ENCODE measurements at regions of chr1 and their contacts with region 1.

Region 1: GRCh38 chr1:110196917-110197765 is 13.0 kb upstream of the KCNC4 start:
- DNase-seq: peak; percentile 44
- H3K4me3 ChIP-seq: no peak overlapping the region
- H3K27ac ChIP-seq: no peak overlapping the region
- H3K4me1 ChIP-seq: no peaks in the 10 kb centered on the region
- H3K27me3 ChIP-seq: no peaks in the 10 kb centered on the region
- CTCF ChIP-seq: peak; percentile 65 to 88 (median 80)
- POLR2A ChIP-seq: no peak

Region 2: DNA sequence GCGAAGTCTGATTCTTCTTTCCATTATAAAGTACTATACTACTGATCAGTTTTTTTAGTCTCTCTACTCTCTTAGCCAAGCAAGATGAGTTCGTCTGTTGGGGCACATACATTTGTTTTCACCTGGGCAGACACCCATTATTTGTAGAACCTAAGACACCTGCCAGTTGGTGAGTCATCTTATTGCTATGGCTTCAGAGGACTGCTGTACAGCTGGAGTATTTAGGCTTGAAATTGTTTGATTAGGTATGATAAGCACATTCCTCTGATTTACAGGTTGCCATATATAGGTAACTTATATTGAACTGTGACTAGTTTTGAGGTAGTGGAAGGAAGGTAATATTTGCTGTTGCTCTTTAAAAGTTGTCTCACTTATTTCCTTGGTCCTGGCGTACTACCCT is 159.3 kb after region 1 on chr1:
- intact Hi-C with region 1: no loop called
- DNase-seq: no peak
- H3K4me3 ChIP-seq: no peak overlapping the region
- H3K27ac ChIP-seq: no peak overlapping the region
- H3K4me1 ChIP-seq: no peaks in the 10 kb centered on the region
- H3K27me3 ChIP-seq: no peaks in the 10 kb centered on the region
- CTCF ChIP-seq: no peak
- POLR2A ChIP-seq: no peak

Region 3: DNA sequence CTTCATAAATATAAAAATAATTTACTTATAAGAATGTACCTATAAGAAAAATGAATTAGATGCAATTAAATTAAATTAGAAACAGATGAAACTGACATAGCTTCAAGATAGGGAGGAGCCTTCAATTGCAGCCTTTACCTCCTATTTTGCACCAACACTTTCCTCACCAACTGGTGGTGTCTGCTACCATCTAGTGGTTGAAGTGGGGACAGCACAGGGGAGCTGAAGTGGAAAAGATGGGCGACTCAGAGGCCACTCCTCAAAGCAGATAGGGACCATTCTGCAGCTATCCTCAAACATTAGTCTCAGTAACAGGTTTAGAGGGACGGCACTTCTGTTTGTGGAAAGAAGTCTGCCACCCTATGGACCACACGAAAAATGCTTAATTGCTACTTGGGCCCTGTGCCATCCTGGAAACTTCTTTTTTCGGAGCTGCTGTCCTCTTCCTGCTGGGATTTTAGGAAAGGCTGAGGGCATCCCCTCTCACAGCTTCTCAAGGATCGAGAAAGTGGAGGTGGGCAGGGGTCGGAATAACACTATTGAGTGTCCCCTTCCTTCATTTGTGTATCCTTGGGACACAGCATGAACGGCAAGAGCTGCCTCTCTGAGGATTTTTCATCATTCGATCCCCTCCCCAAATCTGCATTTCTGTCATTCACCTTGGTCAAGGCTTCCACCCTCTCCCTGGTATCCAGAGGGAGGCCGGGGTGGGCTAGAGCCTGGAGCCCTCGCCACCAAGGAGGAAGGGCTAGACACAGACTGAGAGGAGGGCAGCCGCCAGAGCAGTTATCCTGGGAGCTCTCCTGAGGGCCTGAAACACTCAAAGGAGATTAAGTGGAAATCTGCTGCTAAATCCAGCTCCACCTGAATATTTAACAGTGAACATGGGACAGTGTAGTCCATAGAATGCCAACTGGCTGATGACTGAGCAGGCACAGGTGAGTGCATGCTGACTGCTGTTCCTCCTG is 263.4 kb after region 1 on chr1:
- intact Hi-C with region 1: loop called (anchors 10 kb)
- DNase-seq: peak; percentile 93
- H3K4me3 ChIP-seq: no peak overlapping the region
- H3K27ac ChIP-seq: no peak overlapping the region
- H3K4me1 ChIP-seq: peaks cover 6% of the 10 kb centered on the region
- H3K27me3 ChIP-seq: no peaks in the 10 kb centered on the region
- CTCF ChIP-seq: peak; percentile 94 to 98 (median 95)
- POLR2A ChIP-seq: no peak

Measured in testis (tissue), 5 donors.